ENCODE measurements at regions of chr11 and their contacts with region 1.

Region 1: DNA sequence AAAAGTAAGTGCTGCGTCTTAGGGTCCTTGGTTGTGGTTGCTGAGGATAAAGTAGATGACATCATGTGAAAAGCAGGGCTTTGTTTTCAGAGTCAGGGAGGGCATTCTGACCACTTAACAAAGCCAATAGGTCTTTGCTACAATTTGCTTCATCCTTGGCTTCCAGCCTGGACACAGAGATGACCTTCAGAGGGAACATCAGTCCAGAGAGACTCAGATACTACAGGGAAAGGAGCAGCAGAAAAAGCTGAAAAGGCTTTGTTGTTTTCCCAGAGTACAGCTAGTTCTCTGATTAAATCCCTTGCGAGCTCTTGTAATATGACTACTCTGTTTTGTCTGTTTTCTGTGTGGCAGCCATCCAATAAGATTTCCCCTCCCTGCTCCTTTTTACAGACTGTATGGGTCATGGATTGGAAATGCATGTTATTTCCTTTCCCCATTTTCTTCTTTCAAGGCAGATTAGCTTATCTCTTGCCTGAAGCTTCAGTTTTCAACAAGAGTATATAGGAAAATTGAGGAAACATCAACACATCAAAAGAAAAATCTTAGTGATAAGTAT is 31.9 kb downstream of the ATG13 start:
- DNase-seq: no peak
- ATAC-seq: peak; percentile 97

Region 2: GRCh38 chr11:46700241-46701077 is 51.2 kb after region 1 on chr11 and contains the starts of genes ARHGAP1 and ZNF408:
- intact Hi-C with region 1: loop called (anchors 2 kb)
- DNase-seq: peak; percentile 99
- ATAC-seq: peak; percentile 96
- total RNA-seq, gene ARHGAP1: 68.4 TPM
- total RNA-seq, gene ZNF408: 6.0 TPM

Measured in Right ventricle myocardium inferior (tissue), 1 donor.